BJ (cell line): ENCODE measurements at regions of chr22 and their contacts with region 1.

Region 1: GRCh38 chr22:26172389-26172990 is 3.2 kb downstream of the SEZ6L start:
- DNase-seq: no peak
- H3K4me3 ChIP-seq: no peak overlapping the region
- H3K27me3 ChIP-seq: peaks cover 23% of the 10 kb centered on the region
- CTCF ChIP-seq: peak; percentile 76

Region 2: DNA sequence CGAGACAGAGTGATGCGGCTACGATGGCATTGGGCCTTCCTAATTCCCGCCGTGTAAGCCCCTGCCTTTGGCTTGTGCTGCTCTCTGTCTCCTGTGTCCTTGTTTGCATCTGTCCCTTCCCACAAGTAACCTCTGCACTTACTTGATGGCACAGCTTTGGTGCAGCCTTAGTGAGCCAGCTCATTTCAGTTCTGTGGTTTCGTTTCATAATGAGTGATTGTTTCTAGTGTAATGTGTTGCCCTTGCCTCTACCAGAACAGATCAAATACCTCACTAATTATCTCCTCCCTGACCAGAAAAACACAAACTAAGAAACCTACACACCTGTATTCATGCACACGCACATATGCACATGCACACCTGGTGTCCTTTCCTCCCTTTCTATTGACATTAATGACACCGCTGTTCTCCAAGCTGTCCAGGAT is 549.2 kb before region 1 on chr22:
- CTCF ChIA-PET with region 1: no interaction called
- POLR2A ChIA-PET with region 1: no interaction called
- DNase-seq: no peak
- H3K4me3 ChIP-seq: no peak overlapping the region
- H3K27me3 ChIP-seq: no peaks in the 10 kb centered on the region
- CTCF ChIP-seq: no peak

Region 3: GRCh38 chr22:26066534-26066933 is 106.0 kb before region 1 on chr22:
- CTCF ChIA-PET with region 1: no interaction called
- POLR2A ChIA-PET with region 1: no interaction called
- DNase-seq: no peak
- H3K4me3 ChIP-seq: no peak overlapping the region
- H3K27me3 ChIP-seq: no peaks in the 10 kb centered on the region
- CTCF ChIP-seq: no peak

Region 4: DNA sequence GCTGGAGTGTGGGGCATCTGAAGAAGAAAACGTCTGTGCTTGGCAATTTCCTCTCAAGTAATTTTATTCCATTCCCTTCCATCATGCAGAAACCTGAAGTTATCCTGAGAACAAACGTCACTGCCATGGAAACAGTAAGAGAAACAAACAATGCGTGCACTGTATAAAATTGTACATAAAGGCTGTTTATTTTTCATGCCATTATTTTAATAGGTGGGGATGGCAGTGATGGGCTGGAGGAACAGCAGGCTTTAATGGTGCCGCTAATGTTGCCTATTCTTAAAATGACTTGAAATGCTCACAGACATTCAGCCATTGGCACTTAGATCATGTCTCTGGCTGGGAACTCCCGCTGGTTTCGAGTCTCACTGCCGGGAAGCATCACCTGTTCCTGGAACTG is 10.7 kb before region 1 on chr22:
- CTCF ChIA-PET with region 1: interaction called, 10 read pairs
- POLR2A ChIA-PET with region 1: no interaction called
- DNase-seq: no peak
- H3K4me3 ChIP-seq: no peak overlapping the region
- H3K27me3 ChIP-seq: no peaks in the 10 kb centered on the region
- CTCF ChIP-seq: no peak

Region 5: DNA sequence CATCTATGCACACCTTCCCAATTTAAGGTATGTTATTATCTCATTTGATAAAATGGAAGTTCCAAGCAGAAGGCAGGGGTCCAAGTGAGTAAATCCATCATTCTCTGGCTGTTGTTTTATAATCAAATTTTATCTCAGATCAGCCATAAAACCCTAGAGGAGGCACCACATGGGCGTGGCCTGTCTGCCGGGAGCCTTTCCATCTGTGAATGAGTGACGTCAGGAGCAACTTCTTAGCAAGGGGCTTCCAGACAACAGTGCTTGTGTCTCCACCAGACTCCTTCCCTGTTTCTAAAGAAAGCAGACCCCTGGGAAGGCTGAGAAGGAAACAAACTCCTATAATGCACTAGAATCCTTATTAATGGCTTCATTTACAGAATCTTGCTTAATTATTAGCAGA is 10.2 kb after region 1 on chr22:
- CTCF ChIA-PET with region 1: interaction called, 17 read pairs
- POLR2A ChIA-PET with region 1: no interaction called
- DNase-seq: no peak
- H3K4me3 ChIP-seq: no peak overlapping the region
- H3K27me3 ChIP-seq: no peaks in the 10 kb centered on the region
- CTCF ChIP-seq: no peak

Region 6: DNA sequence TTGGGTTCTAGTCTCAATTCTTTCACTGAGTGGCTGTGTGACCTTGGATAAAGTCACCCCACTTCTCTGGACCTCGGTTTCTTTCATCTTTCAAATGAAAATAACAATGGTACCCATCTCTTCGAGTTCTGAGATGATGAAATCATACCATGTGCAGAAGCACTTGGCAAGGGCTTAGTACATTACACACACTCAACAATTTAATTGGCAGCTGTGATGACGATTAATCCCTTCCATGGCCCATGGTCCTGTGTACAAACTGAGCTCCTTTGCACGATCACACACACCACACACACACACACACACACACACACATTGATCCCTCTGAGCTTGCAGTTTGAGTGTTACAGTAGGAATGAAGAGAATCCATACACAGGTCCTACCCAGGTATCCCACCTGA is 153.2 kb after region 1 on chr22:
- CTCF ChIA-PET with region 1: interaction called, 12 read pairs
- POLR2A ChIA-PET with region 1: interaction called, 3 read pairs
- DNase-seq: no peak
- H3K4me3 ChIP-seq: no peak overlapping the region
- H3K27me3 ChIP-seq: peaks cover 2% of the 10 kb centered on the region; the same call in 1 of the 2 replicates
- CTCF ChIP-seq: no peak